Activated CD4-positive, alpha-beta T cell treated with anti-CD3 and anti-CD28 coated beads for 36 hours (primary cell): ENCODE measurements at regions of chr19 and their contacts with region 1.

Region 1: GRCh38 chr19:48110350-48110966 is at the start of gene PLA2G4C:
- DNase-seq: peak; percentile 93
- ATAC-seq: peak; percentile 84
- H3K4me3 Mint-ChIP-seq: peak within 1 kb of the TSS; percentile 81
- H3K27ac Mint-ChIP-seq: peak within 1 kb of the TSS; percentile 95
- H3K4me1 Mint-ChIP-seq: peaks cover 20% of the 10 kb centered on the region
- H3K27me3 Mint-ChIP-seq: no peaks in the 10 kb centered on the region
- total RNA-seq, gene PLA2G4C: 11.5 to 12.4 TPM

Region 2: DNA sequence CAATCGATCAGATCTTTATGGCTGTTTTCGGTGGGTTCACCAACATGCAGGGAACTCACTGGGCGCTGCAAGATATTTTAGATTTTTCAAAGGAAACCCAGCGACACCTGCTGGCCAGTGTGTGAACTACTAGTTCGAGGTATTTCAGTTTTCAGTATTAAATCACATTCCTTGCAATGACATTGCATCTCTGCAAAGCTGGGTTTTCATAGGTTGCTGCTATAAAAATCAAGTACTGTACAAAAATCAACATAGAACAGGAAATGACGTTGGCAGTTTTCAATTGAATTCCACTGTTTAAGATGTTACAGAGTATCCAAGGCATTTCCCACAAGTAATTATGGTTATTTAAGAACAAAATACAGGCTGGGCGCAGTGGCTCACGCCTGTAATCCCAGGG is 42.1 kb after region 1 on chr19:
- CTCF ChIA-PET with region 1: interaction called, 35 read pairs
- POLR2A ChIA-PET with region 1: no interaction called
- intact Hi-C with region 1: loop called (anchors 1 kb)
- DNase-seq: peak; percentile 80
- ATAC-seq: peak; percentile 53
- H3K4me3 Mint-ChIP-seq: no peak overlapping the region
- H3K27ac Mint-ChIP-seq: no peak overlapping the region
- H3K4me1 Mint-ChIP-seq: no peaks in the 10 kb centered on the region
- H3K27me3 Mint-ChIP-seq: no peaks in the 10 kb centered on the region

Region 3: DNA sequence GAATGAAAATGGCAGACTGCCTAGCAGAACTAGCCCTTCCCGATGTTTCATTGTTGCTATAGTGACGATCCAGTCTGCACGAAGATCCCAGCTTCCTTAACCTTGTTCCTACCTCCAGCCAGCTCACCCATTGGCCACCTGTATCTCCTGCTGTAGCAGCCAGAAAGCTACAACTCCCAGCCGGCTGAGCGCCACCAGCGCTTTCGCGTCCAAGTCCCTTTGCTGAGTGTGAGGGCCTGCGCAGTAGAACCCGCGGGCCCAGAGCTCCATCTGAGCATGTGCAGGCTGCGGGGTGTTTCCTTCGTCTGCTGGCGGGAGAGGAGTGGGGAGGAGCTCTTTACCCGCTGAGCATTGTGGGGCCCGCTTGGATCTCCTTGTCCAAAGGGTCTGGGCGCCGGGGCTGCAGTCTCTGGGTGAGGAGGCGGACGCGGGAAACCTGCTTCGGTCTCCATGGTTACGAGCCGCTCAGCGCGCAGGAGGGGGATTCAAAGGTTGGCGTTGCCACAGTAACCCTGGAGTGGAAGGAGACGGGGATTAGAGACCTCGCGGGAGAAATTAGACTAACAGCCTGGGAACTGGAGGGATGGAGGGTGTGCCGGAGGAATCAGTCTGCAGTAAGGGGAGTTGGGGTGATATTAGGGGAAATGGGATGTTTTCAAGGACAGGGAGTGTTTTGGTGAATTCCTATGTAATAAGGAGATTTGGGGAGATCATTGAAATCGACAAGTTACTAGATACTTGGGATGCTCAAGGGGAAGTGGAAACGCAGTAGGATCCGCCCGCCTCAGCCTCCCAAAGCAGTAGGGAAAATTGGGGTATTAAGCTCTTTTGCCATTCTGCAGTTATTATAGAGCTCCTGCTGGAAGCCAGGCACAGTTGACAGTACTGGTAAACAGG is 93.5 kb after region 1 on chr19:
- CTCF ChIA-PET with region 1: interaction called, 4 read pairs
- POLR2A ChIA-PET with region 1: interaction called, 3 read pairs
- intact Hi-C with region 1: loop called in 1 of 2 experiments (anchors 2 kb)
- DNase-seq: peak; percentile 97
- ATAC-seq: peak; percentile 100
- H3K4me3 Mint-ChIP-seq: no peak overlapping the region
- H3K27ac Mint-ChIP-seq: no peak overlapping the region
- H3K4me1 Mint-ChIP-seq: peaks cover 16% of the 10 kb centered on the region
- H3K27me3 Mint-ChIP-seq: no peaks in the 10 kb centered on the region

Region 4: GRCh38 chr19:48255376-48256303 is 145.2 kb after region 1 on chr19 and contains the start of gene CARD8:
- CTCF ChIA-PET with region 1: interaction called, 7 read pairs
- POLR2A ChIA-PET with region 1: interaction called, 3 read pairs
- intact Hi-C with region 1: loop called in 1 of 2 experiments (anchors 1 kb)
- DNase-seq: peak; percentile 89
- ATAC-seq: peak; percentile 89
- H3K4me3 Mint-ChIP-seq: peak within 1 kb of the TSS; percentile 92
- H3K27ac Mint-ChIP-seq: peak within 1 kb of the TSS; percentile 98
- H3K4me1 Mint-ChIP-seq: peaks cover 63% of the 10 kb centered on the region
- H3K27me3 Mint-ChIP-seq: no peaks in the 10 kb centered on the region
- total RNA-seq, gene CARD8: 109 to 118 TPM

Region 5: GRCh38 chr19:48271531-48272151 is 161.2 kb after region 1 on chr19:
- CTCF ChIA-PET with region 1: interaction called, 3 read pairs
- POLR2A ChIA-PET with region 1: no interaction called
- intact Hi-C with region 1: loop called in 1 of 2 experiments (anchors 5 kb)
- DNase-seq: peak; percentile 24
- ATAC-seq: peak; percentile 34
- H3K4me3 Mint-ChIP-seq: peak overlapping the region; percentile 75
- H3K27ac Mint-ChIP-seq: no peak overlapping the region
- H3K4me1 Mint-ChIP-seq: peaks cover 12% of the 10 kb centered on the region
- H3K27me3 Mint-ChIP-seq: peaks cover 20% of the 10 kb centered on the region

Region 6: DNA sequence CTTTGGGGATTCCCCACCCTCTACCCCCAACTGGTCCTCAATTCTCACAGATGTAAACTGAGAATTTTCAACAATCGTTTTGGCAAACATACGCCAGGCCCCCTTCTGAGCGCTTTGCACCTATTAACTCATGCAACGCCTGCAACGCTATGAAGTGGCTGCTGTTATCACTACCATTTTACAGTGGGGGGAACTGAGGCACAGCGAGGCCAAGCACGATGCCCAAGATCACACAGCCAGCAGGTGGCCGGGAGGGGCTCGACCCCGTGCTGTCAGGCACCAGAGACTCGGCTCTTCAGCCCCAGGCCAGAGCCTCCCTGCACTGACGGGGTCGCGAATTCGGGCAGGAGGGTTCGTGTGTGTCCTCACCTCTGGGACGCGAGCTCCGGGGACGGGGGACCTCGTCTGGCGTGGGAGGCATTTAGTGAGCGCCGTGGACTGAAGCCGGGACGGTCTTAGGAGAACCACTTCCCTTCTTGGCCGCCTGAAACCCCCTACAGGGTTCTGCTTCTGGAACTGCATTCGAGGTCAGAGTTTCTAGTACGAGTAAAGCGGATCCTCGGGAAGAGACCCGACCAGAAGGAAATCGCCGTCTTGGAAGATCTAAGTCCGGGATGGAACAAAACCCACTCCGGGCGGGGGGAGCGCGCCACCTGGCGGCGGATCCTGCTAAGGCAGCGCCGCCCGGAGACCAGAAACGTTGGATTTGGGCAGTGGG is 180.5 kb after region 1 on chr19:
- CTCF ChIA-PET with region 1: interaction called, 4 read pairs
- POLR2A ChIA-PET with region 1: no interaction called
- intact Hi-C with region 1: loop called in 1 of 2 experiments (anchors 2 kb)
- DNase-seq: peak; percentile 74
- ATAC-seq: peak; percentile 53
- H3K4me3 Mint-ChIP-seq: peak overlapping the region; percentile 64
- H3K27ac Mint-ChIP-seq: no peak overlapping the region
- H3K4me1 Mint-ChIP-seq: peaks cover 3% of the 10 kb centered on the region
- H3K27me3 Mint-ChIP-seq: peaks cover under 1% of the 10 kb centered on the region

Region 7: DNA sequence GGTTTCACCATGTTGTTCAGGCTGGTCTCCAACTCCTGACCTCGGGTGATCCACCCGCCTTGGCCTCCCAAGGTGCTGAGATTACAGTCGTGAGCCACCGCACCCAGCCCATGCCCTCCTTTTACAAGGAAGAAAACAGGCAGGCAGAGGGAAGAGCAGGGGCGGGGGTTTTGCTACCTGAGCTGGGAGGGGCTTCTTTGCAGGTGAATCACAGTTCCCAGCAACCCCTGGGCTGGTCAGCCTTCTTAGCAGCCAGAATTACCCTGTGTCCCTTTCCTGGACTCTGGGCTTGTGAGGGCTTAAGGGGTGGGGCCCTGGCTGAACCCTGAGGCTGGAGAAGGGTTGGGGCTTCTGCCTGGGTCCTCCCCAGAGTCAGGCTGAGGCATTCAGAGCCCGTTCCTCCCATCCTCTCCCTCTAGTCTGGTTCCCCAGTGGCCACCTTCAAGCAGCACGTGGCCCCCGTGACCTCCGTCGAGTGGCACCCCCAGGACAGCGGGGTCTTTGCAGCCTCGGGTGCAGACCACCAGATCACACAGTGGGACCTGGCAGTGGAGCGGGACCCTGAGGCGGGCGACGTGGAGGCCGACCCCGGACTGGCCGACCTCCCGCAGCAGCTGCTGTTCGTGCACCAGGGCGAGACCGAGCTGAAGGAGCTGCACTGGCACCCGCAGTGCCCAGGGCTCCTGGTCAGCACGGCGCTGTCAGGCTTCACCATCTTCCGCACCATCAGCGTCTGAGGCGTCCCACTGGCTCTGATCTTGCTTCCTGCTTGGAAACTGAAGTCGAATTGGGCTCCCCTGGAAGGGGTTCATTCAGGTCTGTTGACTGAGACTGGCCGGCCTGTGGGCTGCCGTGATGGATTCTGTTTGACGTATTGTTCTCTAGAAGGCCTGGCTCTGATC is 342.1 kb after region 1 on chr19:
- CTCF ChIA-PET with region 1: no interaction called
- POLR2A ChIA-PET with region 1: no interaction called
- intact Hi-C with region 1: no loop called
- DNase-seq: no peak
- ATAC-seq: no peak
- H3K4me3 Mint-ChIP-seq: no peak overlapping the region
- H3K27ac Mint-ChIP-seq: no peak overlapping the region
- H3K4me1 Mint-ChIP-seq: peaks cover 12% of the 10 kb centered on the region
- H3K27me3 Mint-ChIP-seq: no peaks in the 10 kb centered on the region